MCF 10A (cell line): ENCODE measurements at regions of chrX and their contacts with region 1.

Region 1: DNA sequence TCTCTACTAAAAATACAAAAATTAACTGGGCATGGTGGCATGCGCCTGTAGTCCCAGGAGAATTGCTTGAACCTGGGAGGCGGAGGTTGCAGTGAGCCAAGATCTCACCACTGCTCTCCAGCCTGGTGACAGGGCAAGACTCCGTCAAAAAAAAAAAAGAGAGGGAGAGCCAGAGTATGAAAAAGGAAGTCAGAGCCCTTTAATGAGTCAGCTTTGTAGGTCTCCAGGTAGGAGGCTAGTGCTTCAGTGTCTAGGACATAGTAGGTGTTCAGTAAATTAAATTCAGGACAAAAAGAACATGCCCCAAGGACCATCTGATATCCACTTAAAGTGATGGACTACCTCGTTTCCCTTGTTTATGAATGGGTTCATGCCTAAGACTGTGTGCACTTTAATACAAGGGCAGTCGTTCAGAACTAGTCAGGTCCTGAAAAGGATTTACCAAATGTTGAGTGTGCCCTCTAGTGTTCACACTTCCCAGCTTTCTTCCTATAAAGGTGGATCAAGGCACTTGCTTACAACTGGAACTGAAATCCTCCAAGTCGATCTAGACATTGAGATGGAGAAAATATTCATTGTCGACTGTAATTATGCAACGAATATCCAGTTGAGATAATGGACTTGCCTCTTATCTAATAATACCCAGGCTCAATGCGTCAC is 29.0 kb downstream of the F9 start:
- DNase-seq: peak; percentile 70
- H3K4me3 Mint-ChIP-seq: no peak overlapping the region
- H3K27ac Mint-ChIP-seq: no peak overlapping the region
- H3K4me1 Mint-ChIP-seq: peaks cover 4% of the 10 kb centered on the region
- H3K27me3 Mint-ChIP-seq: no peaks in the 10 kb centered on the region
- CTCF ChIP-seq: peak; percentile 33

Region 2: GRCh38 chrX:138756234-138756633 is 803.3 kb before region 1 on chrX:
- CTCF ChIA-PET with region 1: interaction called, 23 read pairs
- POLR2A ChIA-PET with region 1: no interaction called
- intact Hi-C with region 1: no loop called
- DNase-seq: peak; percentile 62
- H3K4me3 Mint-ChIP-seq: no peak overlapping the region
- H3K27ac Mint-ChIP-seq: no peak overlapping the region
- H3K4me1 Mint-ChIP-seq: no peaks in the 10 kb centered on the region
- H3K27me3 Mint-ChIP-seq: no peaks in the 10 kb centered on the region
- CTCF ChIP-seq: peak; percentile 29

Region 3: GRCh38 chrX:138775517-138775916 is 784.0 kb before region 1 on chrX:
- CTCF ChIA-PET with region 1: interaction called, 20 read pairs
- POLR2A ChIA-PET with region 1: no interaction called
- intact Hi-C with region 1: loop called (anchors 1 kb)
- DNase-seq: peak; percentile 55
- H3K4me3 Mint-ChIP-seq: no peak overlapping the region
- H3K27ac Mint-ChIP-seq: no peak overlapping the region
- H3K4me1 Mint-ChIP-seq: peaks cover 13% of the 10 kb centered on the region
- H3K27me3 Mint-ChIP-seq: no peaks in the 10 kb centered on the region
- CTCF ChIP-seq: peak; percentile 37

Region 4: DNA sequence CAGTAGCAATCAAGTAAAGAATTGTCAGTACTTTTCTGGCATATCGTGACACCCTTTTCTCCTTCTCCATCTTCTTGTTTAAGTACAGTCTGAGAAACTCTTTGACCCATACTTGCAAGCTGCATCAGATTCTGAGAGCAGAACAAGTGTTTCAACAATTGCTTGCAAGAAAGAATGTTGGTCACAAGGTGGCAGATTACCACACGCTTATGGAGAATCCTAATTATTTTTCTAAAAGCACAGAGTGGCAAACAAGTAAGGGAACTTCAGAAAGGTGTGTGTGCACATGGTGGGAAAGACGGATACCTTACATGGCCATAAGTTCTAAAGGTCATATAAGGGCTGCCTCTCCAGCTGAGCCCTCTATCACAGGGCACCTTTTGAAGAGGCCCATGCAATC is 711.6 kb before region 1 on chrX:
- CTCF ChIA-PET with region 1: interaction called, 21 read pairs
- POLR2A ChIA-PET with region 1: no interaction called
- intact Hi-C with region 1: loop called (anchors 1 kb)
- DNase-seq: peak; percentile 31
- H3K4me3 Mint-ChIP-seq: no peak overlapping the region
- H3K27ac Mint-ChIP-seq: no peak overlapping the region
- H3K4me1 Mint-ChIP-seq: no peaks in the 10 kb centered on the region
- H3K27me3 Mint-ChIP-seq: no peaks in the 10 kb centered on the region
- CTCF ChIP-seq: peak; percentile 34

Region 5: DNA sequence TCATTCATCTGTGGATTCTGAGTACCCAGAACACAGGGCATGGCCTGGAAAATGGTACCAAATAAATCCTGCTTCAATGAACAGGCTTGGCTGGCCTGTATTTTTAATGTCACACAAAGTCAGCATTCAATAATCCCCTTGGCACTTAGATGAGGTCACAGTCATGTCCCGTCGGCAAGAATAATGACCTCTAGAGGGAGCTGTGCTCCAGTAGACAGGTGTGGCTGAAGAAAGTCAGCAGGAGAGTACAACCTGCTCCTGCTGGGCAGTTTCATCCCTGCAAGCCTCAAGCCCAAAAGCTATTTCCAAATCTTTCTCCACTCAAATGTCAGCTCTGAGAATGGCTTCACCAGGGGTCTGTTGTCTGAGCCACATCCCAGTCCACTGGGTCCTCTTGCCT is 433.0 kb before region 1 on chrX:
- CTCF ChIA-PET with region 1: no interaction called
- POLR2A ChIA-PET with region 1: no interaction called
- intact Hi-C with region 1: loop called (anchors 1 kb)
- DNase-seq: peak; percentile 66
- H3K4me3 Mint-ChIP-seq: no peak overlapping the region
- H3K27ac Mint-ChIP-seq: no peak overlapping the region
- H3K4me1 Mint-ChIP-seq: no peaks in the 10 kb centered on the region
- H3K27me3 Mint-ChIP-seq: no peaks in the 10 kb centered on the region
- CTCF ChIP-seq: peak; percentile 27

Region 6: GRCh38 chrX:139759637-139760036 is 200.1 kb after region 1 on chrX:
- CTCF ChIA-PET with region 1: interaction called, 3 read pairs
- POLR2A ChIA-PET with region 1: interaction called, 4 read pairs
- intact Hi-C with region 1: loop called (anchors 1 kb)
- DNase-seq: peak; percentile 40
- H3K4me3 Mint-ChIP-seq: no peak overlapping the region
- H3K27ac Mint-ChIP-seq: no peak overlapping the region
- H3K4me1 Mint-ChIP-seq: no peaks in the 10 kb centered on the region
- H3K27me3 Mint-ChIP-seq: no peaks in the 10 kb centered on the region
- CTCF ChIP-seq: peak; percentile 50

Region 7: DNA sequence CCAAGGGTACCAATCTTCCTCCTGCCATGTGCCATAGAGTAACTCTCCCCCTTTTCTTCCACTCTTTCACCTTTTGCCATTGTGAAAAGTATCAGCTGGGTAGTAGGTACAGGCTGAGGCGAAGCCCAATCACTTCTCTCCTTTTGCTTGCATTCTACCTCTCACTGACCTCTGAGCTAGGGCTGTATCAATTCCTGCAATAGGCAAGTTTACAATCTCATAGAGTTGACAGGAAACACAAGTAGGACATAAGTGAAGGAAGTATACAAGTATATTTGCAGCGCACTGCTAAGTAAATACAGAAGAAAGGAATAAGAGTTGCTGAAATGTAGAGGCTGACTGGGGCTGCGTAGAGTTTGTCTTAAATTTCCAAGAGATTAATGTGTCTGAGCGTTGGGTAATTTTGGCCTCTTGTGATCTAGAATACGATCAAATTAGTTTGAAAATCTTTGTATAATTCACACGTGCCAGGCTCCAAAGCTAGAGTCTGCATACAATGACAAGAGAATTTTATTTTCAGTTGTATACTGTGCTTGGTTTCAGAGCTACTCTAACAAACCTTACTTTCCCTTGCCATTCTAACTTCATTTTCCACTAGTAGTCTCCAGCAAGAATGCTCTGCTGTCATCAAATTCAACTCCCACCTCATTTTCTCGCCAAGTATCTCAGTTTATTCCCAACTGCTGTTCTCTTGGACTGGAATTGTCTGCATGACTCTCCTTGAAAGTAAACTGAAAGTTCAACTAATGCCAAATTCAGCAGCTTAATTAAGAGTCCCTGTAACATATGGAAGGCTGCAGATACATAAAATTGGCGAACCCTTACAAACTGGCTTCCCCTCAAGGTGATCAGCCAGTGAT is 283.0 kb after region 1 on chrX:
- CTCF ChIA-PET with region 1: no interaction called
- POLR2A ChIA-PET with region 1: no interaction called
- intact Hi-C with region 1: no loop called
- DNase-seq: no peak
- H3K4me3 Mint-ChIP-seq: no peak overlapping the region
- H3K27ac Mint-ChIP-seq: no peak overlapping the region
- H3K4me1 Mint-ChIP-seq: peaks cover 7% of the 10 kb centered on the region
- H3K27me3 Mint-ChIP-seq: no peaks in the 10 kb centered on the region
- CTCF ChIP-seq: no peak

Region 8: DNA sequence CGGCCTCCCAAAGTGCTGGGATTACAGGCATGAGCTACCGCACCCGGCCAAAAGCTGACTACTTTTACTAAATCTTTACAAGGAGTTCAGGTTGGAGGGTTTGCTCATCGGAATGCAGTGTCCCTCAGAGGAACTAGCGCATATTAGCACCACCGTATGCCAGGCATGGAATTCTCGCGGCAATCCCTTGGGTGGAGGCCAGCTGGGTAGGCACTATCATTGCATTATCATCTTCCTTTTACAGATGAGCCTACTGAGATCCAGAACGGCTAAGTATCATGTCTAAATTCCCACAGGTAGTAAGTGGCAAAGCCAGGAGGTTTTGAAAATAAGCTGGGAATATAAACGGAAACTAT is 411.9 kb after region 1 on chrX:
- CTCF ChIA-PET with region 1: no interaction called
- POLR2A ChIA-PET with region 1: no interaction called
- intact Hi-C with region 1: loop called (anchors 10 kb)
- DNase-seq: no peak
- H3K4me3 Mint-ChIP-seq: no peak overlapping the region
- H3K27ac Mint-ChIP-seq: no peak overlapping the region
- H3K4me1 Mint-ChIP-seq: no peaks in the 10 kb centered on the region
- H3K27me3 Mint-ChIP-seq: no peaks in the 10 kb centered on the region
- CTCF ChIP-seq: no peak